Naive thymus-derived CD4-positive, alpha-beta T cell (primary cell): ENCODE measurements at regions of chr17 and their contacts with region 1.

Region 1: GRCh38 chr17:29293890-29294579 is at the start of gene NUFIP2:
- DNase-seq: peak; percentile 93 to 99 (median 98)
- ATAC-seq: peak; percentile 93
- H3K4me3 ChIP-seq: peak within 1 kb of the TSS; percentile 98
- H3K4me3 Mint-ChIP-seq: peak within 1 kb of the TSS; percentile 99 to 100 (median 100)
- H3K27ac ChIP-seq: peak within 1 kb of the TSS; percentile 90
- H3K27ac Mint-ChIP-seq: peak within 1 kb of the TSS; percentile 97 to 100 (median 99)
- H3K4me1 ChIP-seq: peaks cover 28 to 36% of the 10 kb centered on the region in 2 donors
- H3K4me1 Mint-ChIP-seq: peaks cover 26 to 45% (median 41%) of the 10 kb centered on the region in 7 donors
- H3K27me3 ChIP-seq: no peaks in the 10 kb centered on the region
- H3K27me3 Mint-ChIP-seq: peaks cover 0 to 4% (median 0%) of the 10 kb centered on the region in 5 donors
- total RNA-seq, gene NUFIP2: 60.4 to 85.3 (median 73.0) TPM

Region 2: DNA sequence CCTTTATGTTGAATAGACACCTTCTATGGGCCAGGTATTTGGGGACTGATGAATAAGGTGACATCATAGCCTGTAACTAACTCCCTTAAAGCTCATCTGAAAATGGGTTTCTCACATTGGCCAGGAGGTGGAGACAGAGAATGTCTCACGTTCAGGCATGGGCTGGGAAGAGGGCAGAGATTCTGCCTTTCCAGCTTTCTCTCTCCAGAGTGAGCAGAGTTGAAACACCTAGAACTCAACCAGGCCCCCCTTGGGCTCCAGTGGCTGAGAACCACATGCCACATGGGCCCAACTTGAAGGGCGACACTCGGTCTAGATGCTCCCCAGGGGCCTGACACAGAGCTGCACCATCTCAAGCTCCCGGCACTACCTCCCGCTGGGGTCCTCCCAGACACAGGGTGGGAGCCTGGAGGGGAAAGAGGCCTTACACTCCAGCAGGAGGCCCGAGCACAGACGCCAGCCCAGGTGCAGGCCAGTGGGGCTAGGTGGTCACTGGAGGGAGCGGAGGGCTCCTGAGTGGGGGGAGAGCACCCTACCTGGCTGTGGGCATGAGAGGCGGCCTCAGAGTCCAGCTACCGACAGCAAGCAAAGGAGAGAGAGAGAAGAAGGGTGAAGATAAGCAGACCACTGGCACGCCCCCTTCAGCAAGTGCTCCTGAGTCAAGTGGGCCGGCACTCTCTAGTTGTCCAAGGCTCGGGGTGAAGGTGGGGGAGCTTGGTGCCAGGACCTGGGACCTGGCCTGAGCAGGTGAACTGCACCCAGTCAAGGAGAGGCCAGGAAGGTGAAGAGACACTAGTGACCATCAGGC is 169.7 kb before region 1 on chr17:
- CTCF ChIA-PET with region 1: no interaction called
- POLR2A ChIA-PET with region 1: no interaction called
- intact Hi-C with region 1: loop called (anchors 1 kb)
- DNase-seq: peak in 6 of 9 donors; percentile 34 to 59 (median 48)
- ATAC-seq: peak; percentile 87
- H3K4me3 ChIP-seq: no peak overlapping the region
- H3K4me3 Mint-ChIP-seq: no peak overlapping the region
- H3K27ac ChIP-seq: no peak overlapping the region
- H3K27ac Mint-ChIP-seq: peak overlapping the region in 2 of 9 donors; percentile 54 to 55
- H3K4me1 ChIP-seq: no peaks in the 10 kb centered on the region
- H3K4me1 Mint-ChIP-seq: peaks cover 0 to 16% (median 5%) of the 10 kb centered on the region in 7 donors
- H3K27me3 ChIP-seq: no peaks in the 10 kb centered on the region
- H3K27me3 Mint-ChIP-seq: no peaks in the 10 kb centered on the region

Region 3: DNA sequence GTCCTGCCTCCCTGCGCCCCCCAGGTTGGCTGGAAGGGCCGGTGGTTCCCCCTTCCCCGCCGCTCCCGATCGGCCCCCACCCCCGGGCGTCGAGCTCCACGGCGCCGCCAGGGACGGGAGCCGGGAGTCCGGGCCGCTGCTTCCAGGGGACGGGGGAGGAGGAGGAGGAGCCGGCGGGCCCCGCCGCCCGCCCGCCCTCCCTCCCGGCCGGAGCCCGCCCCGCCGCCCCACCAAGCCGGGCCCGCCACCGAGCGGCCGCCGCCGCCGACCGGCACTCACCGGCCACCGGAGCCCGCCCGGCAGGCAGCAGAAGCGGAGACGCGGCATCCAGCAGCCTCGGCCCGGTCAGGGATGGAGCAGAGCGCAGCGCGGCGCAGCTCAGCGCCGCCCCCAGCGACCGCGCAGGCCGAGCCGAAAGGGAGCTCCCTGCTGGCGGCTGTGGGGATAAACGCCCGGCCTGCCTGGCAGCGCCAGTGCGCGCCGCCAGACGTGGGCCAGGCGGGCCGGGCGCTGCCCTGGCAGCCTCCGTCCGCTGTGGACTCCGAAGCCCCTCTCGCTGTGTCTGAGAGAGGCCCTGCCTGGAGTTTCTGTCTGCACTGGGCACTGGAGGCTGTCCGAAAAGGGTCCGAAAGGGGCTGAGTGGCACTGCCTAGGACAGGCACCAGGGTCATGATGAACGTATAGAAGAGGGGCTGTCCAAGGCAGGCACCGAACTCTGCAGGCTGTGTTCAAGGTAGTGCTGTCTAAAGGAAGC is 113.8 kb before region 1 on chr17 and contains the start of gene MYO18A:
- CTCF ChIA-PET with region 1: interaction called, 4 read pairs
- POLR2A ChIA-PET with region 1: no interaction called
- intact Hi-C with region 1: loop called in 1 of 2 experiments (anchors 1 kb)
- DNase-seq: peak; percentile 58 to 85 (median 71)
- ATAC-seq: peak; percentile 98
- H3K4me3 ChIP-seq: peak within 1 kb of the TSS; percentile 37
- H3K4me3 Mint-ChIP-seq: peak within 1 kb of the TSS; percentile 40 to 82 (median 56)
- H3K27ac ChIP-seq: no peak within 1 kb of the TSS
- H3K27ac Mint-ChIP-seq: peak within 1 kb of the TSS in 7 of 9 donors; percentile 9 to 70 (median 48)
- H3K4me1 ChIP-seq: peaks cover 10 to 13% of the 10 kb centered on the region in 2 donors
- H3K4me1 Mint-ChIP-seq: peaks cover 5 to 33% (median 19%) of the 10 kb centered on the region in 7 donors
- H3K27me3 ChIP-seq: no peaks in the 10 kb centered on the region
- H3K27me3 Mint-ChIP-seq: peaks cover 0 to 13% (median 0%) of the 10 kb centered on the region in 5 donors
- total RNA-seq, gene MYO18A: 89.5 to 144 (median 103) TPM

Region 4: DNA sequence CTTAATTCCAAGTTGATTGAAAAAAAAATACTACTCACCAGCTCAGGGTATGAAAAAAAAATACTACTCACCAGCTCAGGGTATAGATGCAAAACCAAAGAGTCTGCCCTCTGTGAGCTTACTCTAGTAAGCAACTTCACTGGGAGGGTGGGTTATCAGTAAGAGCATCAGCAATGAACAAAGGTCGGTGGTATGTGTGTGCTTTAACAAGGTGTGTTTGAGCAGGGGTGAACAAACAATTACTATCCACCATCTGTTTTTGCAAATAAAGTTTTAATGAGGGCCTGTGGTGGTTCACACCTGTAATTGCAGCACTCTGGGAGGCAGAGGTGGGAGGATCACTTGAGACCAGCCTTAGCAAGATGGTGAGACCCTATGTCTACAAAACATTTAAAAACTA is 20.1 kb before region 1 on chr17:
- CTCF ChIA-PET with region 1: no interaction called
- POLR2A ChIA-PET with region 1: interaction called, 6 read pairs
- intact Hi-C with region 1: loop called in 1 of 2 experiments (anchors 2 kb)
- DNase-seq: no peak
- ATAC-seq: no peak
- H3K4me3 ChIP-seq: no peak overlapping the region
- H3K4me3 Mint-ChIP-seq: peak overlapping the region in 6 of 10 donors; percentile 12 to 51 (median 24)
- H3K27ac ChIP-seq: no peak overlapping the region
- H3K27ac Mint-ChIP-seq: peak overlapping the region in 6 of 9 donors; percentile 42 to 81 (median 56)
- H3K4me1 ChIP-seq: peaks cover 19 to 30% of the 10 kb centered on the region in 2 donors
- H3K4me1 Mint-ChIP-seq: peaks cover 39 to 73% (median 65%) of the 10 kb centered on the region in 7 donors
- H3K27me3 ChIP-seq: no peaks in the 10 kb centered on the region
- H3K27me3 Mint-ChIP-seq: no peaks in the 10 kb centered on the region

Region 5: GRCh38 chr17:29568331-29569244 is 274.6 kb after region 1 on chr17 and contains the start of gene TP53I13:
- CTCF ChIA-PET with region 1: no interaction called
- POLR2A ChIA-PET with region 1: interaction called, 3 read pairs
- intact Hi-C with region 1: loop called (anchors 1 to 5 kb)
- DNase-seq: peak; percentile 65 to 90 (median 81)
- ATAC-seq: peak; percentile 81
- H3K4me3 ChIP-seq: peak within 1 kb of the TSS; percentile 89
- H3K4me3 Mint-ChIP-seq: peak within 1 kb of the TSS; percentile 88 to 99 (median 95)
- H3K27ac ChIP-seq: peak within 1 kb of the TSS; percentile 78
- H3K27ac Mint-ChIP-seq: peak within 1 kb of the TSS; percentile 82 to 97 (median 92)
- H3K4me1 ChIP-seq: peaks cover 12 to 30% of the 10 kb centered on the region in 2 donors
- H3K4me1 Mint-ChIP-seq: peaks cover 21 to 42% (median 32%) of the 10 kb centered on the region in 7 donors
- H3K27me3 ChIP-seq: no peaks in the 10 kb centered on the region
- H3K27me3 Mint-ChIP-seq: no peaks in the 10 kb centered on the region
- total RNA-seq, gene TP53I13: 61.6 to 87.5 (median 62.8) TPM

Region 6: GRCh38 chr17:29760761-29761696 is 467.0 kb after region 1 on chr17:
- CTCF ChIA-PET with region 1: no interaction called
- POLR2A ChIA-PET with region 1: no interaction called
- intact Hi-C with region 1: loop called in 1 of 2 experiments (anchors 10 kb)
- DNase-seq: peak; percentile 86 to 95 (median 93)
- ATAC-seq: peak; percentile 94
- H3K4me3 ChIP-seq: peak overlapping the region; percentile 89
- H3K4me3 Mint-ChIP-seq: peak overlapping the region; percentile 90 to 100 (median 98)
- H3K27ac ChIP-seq: peak overlapping the region; percentile 82
- H3K27ac Mint-ChIP-seq: peak overlapping the region; percentile 90 to 98 (median 96)
- H3K4me1 ChIP-seq: peaks cover 25 to 29% of the 10 kb centered on the region in 2 donors
- H3K4me1 Mint-ChIP-seq: peaks cover 16 to 53% (median 37%) of the 10 kb centered on the region in 7 donors
- H3K27me3 ChIP-seq: no peaks in the 10 kb centered on the region
- H3K27me3 Mint-ChIP-seq: no peaks in the 10 kb centered on the region